ENCODE measurements at regions of chr5 and their contacts with region 1.

Region 1: DNA sequence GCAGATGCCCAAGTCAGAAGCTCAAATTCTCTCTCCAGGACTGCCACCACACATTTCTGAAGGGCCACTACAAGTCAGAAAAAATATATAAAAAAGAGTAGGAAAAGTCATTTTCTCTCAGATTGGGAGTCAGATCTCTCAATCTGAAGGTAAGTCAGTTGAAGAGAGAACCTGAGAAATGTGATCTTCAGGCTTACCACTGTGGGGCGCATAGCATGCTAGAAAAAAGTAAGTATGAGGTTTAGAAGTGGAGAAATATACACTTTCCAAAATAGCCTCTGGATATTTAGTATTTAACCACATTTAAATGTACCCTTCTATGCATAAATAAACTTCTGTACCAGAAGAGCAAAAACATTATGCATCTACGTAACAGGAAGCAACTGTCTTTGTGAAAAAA is 800.7 kb upstream of the CTNND2 start:
- DNase-seq: peak; percentile 1
- H3K4me3 ChIP-seq: no peak overlapping the region
- H3K27ac ChIP-seq: no peak overlapping the region
- H3K4me1 ChIP-seq: no peaks in the 10 kb centered on the region
- H3K27me3 ChIP-seq: peaks cover 3% of the 10 kb centered on the region
- CTCF ChIP-seq: peak; percentile 33 to 63

Region 2: GRCh38 chr5:11963227-11963626 is 741.7 kb before region 1 on chr5:
- CTCF ChIA-PET with region 1: no interaction called
- dilution Hi-C with region 1: no loop called
- in situ Hi-C with region 1: no loop called
- intact Hi-C with region 1: no loop called
- DNase-seq: no peak
- H3K4me3 ChIP-seq: no peak overlapping the region
- H3K27ac ChIP-seq: no peak overlapping the region
- H3K4me1 ChIP-seq: no peaks in the 10 kb centered on the region
- H3K27me3 ChIP-seq: no peaks in the 10 kb centered on the region
- CTCF ChIP-seq: no peak

Region 3: DNA sequence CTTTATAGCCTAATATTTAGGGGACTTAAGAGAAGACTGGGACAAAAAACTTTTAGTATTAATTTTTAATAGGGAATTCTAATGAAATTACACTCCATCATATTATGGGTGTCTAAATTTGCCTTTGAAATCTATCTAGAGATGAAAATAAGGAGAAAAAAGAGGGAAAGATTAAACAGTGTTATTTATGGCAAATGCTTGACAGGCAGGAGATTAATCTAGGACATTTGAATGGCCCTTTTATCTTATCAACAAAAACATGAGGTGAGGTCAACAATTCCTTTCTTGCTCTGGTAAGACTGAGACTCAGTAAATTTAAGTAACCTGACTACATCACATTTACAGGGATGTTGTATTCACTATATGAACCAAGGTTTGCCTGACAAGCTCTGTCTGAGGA is 52.1 kb after region 1 on chr5:
- CTCF ChIA-PET with region 1: no interaction called
- dilution Hi-C with region 1: no loop called
- in situ Hi-C with region 1: no loop called
- intact Hi-C with region 1: no loop called
- DNase-seq: no peak
- H3K4me3 ChIP-seq: no peak overlapping the region
- H3K27ac ChIP-seq: no peak overlapping the region
- H3K4me1 ChIP-seq: no peaks in the 10 kb centered on the region
- H3K27me3 ChIP-seq: no peaks in the 10 kb centered on the region
- CTCF ChIP-seq: no peak

Region 4: DNA sequence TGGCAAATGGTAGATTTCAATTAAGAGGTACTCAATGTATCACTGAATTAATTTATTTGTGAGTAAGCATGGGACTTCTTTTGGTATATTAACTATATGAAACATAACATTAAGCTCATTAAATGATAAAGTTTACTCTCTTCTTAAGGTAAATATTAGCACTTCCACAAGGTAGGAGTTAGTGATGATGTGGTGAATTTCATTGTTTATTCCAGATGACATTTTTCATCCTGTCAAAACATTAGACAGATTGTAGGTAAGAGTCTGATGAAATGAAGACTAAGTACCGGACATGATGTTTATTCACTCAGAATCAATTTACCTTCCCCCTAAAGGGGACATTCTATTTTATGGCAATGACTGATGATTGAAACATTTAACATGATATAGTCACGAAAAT is 290.5 kb after region 1 on chr5:
- CTCF ChIA-PET with region 1: no interaction called
- dilution Hi-C with region 1: no loop called
- in situ Hi-C with region 1: no loop called
- intact Hi-C with region 1: no loop called
- DNase-seq: no peak
- H3K4me3 ChIP-seq: no peak overlapping the region
- H3K27ac ChIP-seq: no peak overlapping the region
- H3K4me1 ChIP-seq: no peaks in the 10 kb centered on the region
- H3K27me3 ChIP-seq: no peaks in the 10 kb centered on the region
- CTCF ChIP-seq: no peak

Region 5: GRCh38 chr5:13831351-13831750 is 1126.4 kb after region 1 on chr5:
- CTCF ChIA-PET with region 1: no interaction called
- dilution Hi-C with region 1: no loop called
- in situ Hi-C with region 1: no loop called
- intact Hi-C with region 1: loop called (anchors 2 kb)
- DNase-seq: peak; percentile 74
- H3K4me3 ChIP-seq: no peak overlapping the region
- H3K27ac ChIP-seq: peak overlapping the region; percentile 64
- H3K4me1 ChIP-seq: peaks cover 23% of the 10 kb centered on the region
- H3K27me3 ChIP-seq: no peaks in the 10 kb centered on the region
- CTCF ChIP-seq: peak; percentile 20 to 49